Adrenal gland (tissue), 19 donors: ENCODE measurements at regions of chr1 and their contacts with region 1.

Region 1: DNA sequence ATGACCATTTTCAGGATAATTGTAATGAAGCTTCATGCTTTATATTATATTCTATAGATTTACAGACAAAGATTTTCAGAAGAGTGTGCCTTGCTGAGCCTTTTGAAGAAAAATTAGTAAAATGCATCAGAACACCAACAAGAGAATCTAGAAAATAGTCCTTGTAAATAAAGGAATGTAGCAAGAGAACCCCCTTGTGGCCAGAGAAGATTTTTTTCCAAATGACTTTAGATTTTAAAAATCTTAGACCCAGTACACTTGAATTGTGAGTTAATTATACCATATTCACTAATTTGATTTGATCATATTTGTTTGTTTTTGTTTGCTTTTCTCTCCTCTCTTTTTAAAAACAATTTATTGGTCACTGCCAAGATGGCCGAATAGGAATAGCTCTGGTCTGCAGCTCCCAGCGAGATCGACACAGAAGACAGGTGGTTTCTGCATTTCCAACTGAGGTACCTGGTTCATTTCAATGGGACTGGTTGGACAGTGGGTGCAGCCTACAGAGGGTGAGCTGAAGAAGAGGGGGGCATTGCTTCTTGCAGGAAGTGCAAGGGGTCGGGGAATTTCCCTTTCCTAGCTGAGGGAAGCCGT is 12.8 kb upstream of the IFI44L start:
- DNase-seq: no peak
- H3K4me3 ChIP-seq: no peak overlapping the region
- H3K27ac ChIP-seq: no peak overlapping the region
- H3K4me1 ChIP-seq: no peaks in the 10 kb centered on the region
- H3K27me3 ChIP-seq: no peaks in the 10 kb centered on the region
- CTCF ChIP-seq: peak; percentile 46 to 76 (median 60)
- POLR2A ChIP-seq: no peak

Region 2: DNA sequence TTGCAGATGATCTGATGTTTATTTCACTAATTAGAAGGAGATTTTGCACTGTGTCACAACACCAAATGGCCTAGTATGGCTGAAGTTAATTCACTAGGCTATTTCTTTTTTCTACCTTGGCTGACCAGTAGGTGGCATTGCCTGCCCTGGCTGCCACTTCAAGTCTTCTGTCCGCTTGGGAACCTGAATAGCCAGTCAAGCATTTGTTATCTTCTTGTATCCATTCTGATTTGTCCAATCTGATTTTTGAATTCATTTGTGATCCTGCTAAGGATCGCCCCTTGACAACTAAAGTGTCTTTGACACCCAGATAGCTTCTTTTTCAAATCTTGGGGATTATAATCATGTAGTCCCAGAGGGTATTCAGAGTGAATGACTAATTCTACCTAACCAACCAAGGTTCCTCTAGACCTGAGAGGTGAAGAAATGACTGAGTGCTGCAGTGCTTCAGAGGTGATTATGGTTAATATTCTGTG is 462.3 kb before region 1 on chr1:
- intact Hi-C with region 1: loop called (anchors 5 kb)
- DNase-seq: peak; percentile 40 to 82 (median 66)
- H3K4me3 ChIP-seq: no peak overlapping the region
- H3K27ac ChIP-seq: no peak overlapping the region
- H3K4me1 ChIP-seq: no peaks in the 10 kb centered on the region
- H3K27me3 ChIP-seq: no peaks in the 10 kb centered on the region
- CTCF ChIP-seq: peak; percentile 77 to 90 (median 83)
- POLR2A ChIP-seq: no peak